AG04449 (cell line): ENCODE measurements at regions of chr10 and their contacts with region 1.

Region 1: GRCh38 chr10:91006001-91006751 is 85.3 kb upstream of the ANKRD1 start:
- DNase-seq: peak; percentile 41
- H3K4me3 ChIP-seq: no peak overlapping the region
- CTCF ChIP-seq: peak; percentile 77

Region 2: GRCh38 chr10:90969947-90970684 is 36.1 kb before region 1 on chr10:
- CTCF ChIA-PET with region 1: interaction called, 12 read pairs
- POLR2A ChIA-PET with region 1: no interaction called
- DNase-seq: peak; percentile 59
- H3K4me3 ChIP-seq: no peak overlapping the region
- CTCF ChIP-seq: no peak

Region 3: DNA sequence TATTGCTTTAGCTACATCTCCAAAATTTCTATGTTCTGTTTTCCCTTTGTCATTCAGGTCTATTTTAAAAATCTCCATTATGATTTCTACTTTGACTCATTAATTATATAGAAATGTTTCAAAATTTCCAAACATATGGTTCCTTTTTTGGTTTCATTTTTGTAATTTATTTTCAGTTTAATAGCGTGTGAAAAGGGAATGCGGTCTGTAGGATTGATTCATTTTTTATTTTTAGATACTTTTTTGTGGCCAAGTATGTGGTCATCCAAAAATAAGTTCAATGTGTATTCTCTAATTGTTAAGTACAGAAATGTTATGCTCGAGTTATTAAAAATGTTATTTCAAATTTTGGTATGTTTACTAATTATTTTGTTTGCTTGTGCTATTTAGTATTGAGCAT is 12.8 kb before region 1 on chr10:
- CTCF ChIA-PET with region 1: interaction called, 22 read pairs
- POLR2A ChIA-PET with region 1: no interaction called
- DNase-seq: no peak
- H3K4me3 ChIP-seq: no peak overlapping the region
- CTCF ChIP-seq: no peak

Region 4: DNA sequence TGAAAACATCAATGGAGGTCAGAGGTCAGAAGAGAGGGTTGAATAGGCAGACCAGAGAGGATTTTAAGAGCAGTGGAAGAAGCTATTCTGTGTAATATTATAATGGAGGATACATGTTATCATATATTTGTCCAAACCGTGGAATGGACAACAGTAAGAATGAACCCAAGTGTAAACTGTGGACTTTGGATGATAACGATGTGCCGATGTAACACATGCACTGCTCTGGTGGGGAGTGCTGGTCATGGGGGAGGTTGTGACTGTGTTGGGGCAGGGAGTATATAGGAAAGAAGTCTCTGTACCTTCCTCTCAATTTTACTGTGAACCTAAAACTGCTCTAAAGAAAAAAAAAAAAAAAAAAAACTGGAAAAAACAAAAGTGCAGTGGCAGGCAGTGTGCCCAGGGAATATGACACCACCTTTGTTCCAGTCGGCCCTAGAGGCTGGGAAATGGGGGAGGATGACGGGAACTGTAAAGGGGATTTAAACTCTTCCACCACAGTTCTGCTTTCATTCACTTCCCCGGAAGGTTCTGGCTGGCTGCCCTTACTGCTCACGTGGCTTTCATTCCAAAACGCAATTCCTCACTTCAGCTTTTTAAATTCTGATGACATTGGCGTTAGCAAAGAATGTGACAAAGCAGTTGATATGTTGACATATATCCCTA is 28.5 kb after region 1 on chr10:
- CTCF ChIA-PET with region 1: interaction called, 17 read pairs
- POLR2A ChIA-PET with region 1: no interaction called
- DNase-seq: no peak
- H3K4me3 ChIP-seq: no peak overlapping the region
- CTCF ChIP-seq: no peak